GM13976 (cell line): ENCODE measurements at regions of chr7 and their contacts with region 1.

Region 1: DNA sequence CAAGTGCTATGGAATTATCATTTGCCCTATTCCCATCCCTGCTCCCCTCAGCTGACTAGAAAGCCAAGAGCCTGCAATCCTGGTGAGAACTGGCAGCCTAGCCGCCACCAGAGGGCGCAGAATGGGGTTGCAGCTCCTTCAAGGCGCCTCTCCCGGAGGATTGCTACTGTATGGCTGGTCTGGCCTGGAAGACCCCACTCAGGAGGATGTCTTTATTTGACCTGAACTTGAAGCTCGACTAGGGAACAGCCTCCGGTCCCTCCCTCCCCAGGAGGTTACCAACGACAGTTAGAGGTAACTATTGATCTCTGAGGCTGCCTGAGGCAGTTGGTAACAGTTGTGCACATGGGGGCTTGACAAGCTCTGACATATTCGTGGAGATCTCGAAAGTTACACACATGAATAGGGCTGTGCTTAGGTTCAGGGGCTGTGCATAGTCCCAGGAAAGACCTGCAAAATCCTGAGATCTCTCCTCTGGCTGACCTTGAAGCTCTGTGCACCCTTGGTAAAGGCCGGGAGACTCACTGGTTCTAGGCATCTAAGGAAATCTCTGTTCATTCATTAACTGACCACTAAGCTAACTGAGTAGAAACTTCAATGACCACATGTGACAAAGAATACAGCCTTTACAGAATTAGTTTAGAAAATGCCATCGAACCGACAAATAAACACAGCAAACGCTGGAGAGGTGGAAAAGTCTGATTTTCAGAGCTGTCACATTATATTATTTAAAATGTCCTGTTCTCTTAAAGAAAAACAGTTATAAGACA is 65.7 kb downstream of the TSPAN12 start:
- DNase-seq: peak; percentile 51
- CTCF ChIP-seq: peak; percentile 95

Region 2: GRCh38 chr7:120898715-120899499 is 106.6 kb after region 1 on chr7:
- in situ Hi-C with region 1: no loop called
- DNase-seq: peak; percentile 6
- CTCF ChIP-seq: no peak

Region 3: DNA sequence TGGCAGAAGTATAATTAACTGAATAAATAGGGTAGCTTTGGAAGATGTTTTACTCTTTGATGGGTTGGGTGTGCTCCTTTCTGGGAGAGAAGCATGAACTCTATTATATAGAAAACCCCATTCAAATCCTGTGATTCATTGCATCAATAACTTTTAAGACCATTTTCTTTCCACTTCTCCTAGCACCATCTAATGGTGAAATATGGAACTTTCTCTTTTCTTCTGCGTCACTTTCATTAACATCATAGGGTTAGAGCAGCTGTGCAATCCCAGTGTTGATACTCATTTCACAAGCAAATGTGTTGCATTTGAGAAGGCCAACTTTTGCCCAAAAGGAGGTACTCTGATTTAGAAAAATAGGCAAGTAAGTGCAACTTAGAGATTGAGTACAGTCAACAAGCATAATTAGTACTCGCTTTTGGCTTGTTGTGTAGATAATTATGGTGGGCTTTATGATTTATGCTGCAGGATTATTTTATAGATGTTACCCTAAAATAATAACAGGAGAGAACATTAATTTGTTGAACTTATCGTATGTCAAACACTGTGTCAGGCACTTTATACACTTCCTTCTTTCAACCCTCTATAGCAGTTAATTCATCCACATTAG is 289.2 kb after region 1 on chr7:
- in situ Hi-C with region 1: loop called (anchors 25 kb)
- DNase-seq: peak; percentile 13
- CTCF ChIP-seq: peak; percentile 34